Heart left ventricle (tissue), 16 donors: ENCODE measurements at regions of chr15 and their contacts with region 1.

Region 1: GRCh38 chr15:35680951-35681350 is 135.0 kb upstream of the DPH6 start:
- DNase-seq: no peak
- ATAC-seq: no peak
- H3K4me3 ChIP-seq: no peak overlapping the region
- H3K27ac ChIP-seq: no peak overlapping the region
- H3K4me1 ChIP-seq: peaks cover 0 to 27% (median 8%) of the 10 kb centered on the region in 12 donors
- H3K27me3 ChIP-seq: no peaks in the 10 kb centered on the region
- CTCF ChIP-seq: no peak
- POLR2A ChIP-seq: no peak

Region 2: GRCh38 chr15:35834216-35834830 is 153.4 kb after region 1 on chr15:
- intact Hi-C with region 1: loop called in 1 of 10 experiments (anchors 10 kb)
- DNase-seq: no peak
- ATAC-seq: no peak
- H3K4me3 ChIP-seq: no peak overlapping the region
- H3K27ac ChIP-seq: no peak overlapping the region
- H3K4me1 ChIP-seq: peaks cover 0 to 10% (median 1%) of the 10 kb centered on the region in 12 donors
- H3K27me3 ChIP-seq: no peaks in the 10 kb centered on the region
- CTCF ChIP-seq: no peak
- POLR2A ChIP-seq: no peak